ENCODE measurements at regions of chr3 and their contacts with region 1.

Region 1: GRCh38 chr3:149752051-149752787 is at the start of gene COMMD2:
- DNase-seq: peak; percentile 97
- ATAC-seq: peak; percentile 100
- H3K4me3 ChIP-seq: peak within 1 kb of the TSS; percentile 93 to 95
- H3K27ac ChIP-seq: peak within 1 kb of the TSS; percentile 49
- H3K4me1 ChIP-seq: peaks cover 3 to 15% of the 10 kb centered on the region in 2 experiments; a peak in 3 of 4 replicates
- H3K27me3 ChIP-seq: no peaks in the 10 kb centered on the region
- CTCF ChIP-seq: peak; percentile 47 to 80 (median 55)
- POLR2A ChIP-seq: no peak
- RAD21 ChIP-seq: peak; percentile 75
- total RNA-seq, gene COMMD2: 35.5 TPM

Region 2: DNA sequence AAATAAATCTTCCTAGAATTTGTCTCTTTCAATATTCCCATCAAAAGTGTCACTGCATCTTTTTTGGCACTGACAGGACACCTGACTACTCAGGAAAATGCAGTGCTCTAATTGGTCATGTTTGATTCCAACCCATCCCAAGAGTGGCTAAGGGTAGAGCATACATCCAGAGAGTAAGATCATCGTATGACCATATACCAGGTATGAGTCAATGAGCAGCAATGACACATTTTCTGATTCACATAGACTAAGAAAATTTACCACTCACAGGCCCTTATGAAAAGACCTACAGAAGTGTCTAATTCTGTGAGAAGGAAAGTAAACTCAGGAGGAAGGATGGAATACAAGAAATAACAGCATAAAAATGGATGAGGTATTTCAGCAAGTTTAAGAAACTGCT is 1908.9 kb before region 1 on chr3:
- CTCF ChIA-PET with region 1: no interaction called
- POLR2A ChIA-PET with region 1: no interaction called
- RAD21 ChIA-PET with region 1: no interaction called
- intact Hi-C with region 1: no loop called
- DNase-seq: no peak
- ATAC-seq: no peak
- H3K4me3 ChIP-seq: no peak overlapping the region
- H3K27ac ChIP-seq: no peak overlapping the region
- H3K4me1 ChIP-seq: no peaks in the 10 kb centered on the region
- H3K27me3 ChIP-seq: no peaks in the 10 kb centered on the region
- CTCF ChIP-seq: no peak
- POLR2A ChIP-seq: no peak
- RAD21 ChIP-seq: no peak

Region 3: DNA sequence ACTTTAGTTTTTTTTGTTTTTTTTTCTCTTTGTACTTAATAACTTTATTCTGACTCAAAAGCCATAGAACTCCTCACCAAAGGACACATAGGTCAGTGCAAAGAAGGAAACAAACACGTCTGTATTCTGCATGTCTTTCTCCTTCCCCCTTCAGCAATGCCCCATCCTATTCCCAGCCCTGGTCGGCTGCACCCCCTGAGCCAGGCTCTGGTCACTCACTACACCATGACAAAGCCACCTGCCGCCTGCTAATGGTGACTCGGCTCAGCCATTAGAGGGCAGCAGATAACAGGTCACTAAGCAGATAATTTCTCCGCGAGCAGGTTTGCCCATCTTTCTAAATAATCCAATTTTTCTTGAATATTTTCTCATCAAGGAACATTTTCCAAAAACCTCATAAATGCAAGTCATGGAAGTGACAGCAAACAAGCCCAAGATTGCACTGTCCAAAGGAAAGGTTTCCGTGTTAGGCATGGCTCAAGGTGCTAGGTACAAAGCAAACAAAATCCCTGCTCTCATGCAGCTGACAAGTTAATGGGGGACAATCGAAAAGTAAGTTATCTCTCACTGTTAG is 239.9 kb before region 1 on chr3:
- CTCF ChIA-PET with region 1: interaction called, 4 read pairs
- POLR2A ChIA-PET with region 1: no interaction called
- RAD21 ChIA-PET with region 1: no interaction called
- intact Hi-C with region 1: loop called (anchors 1 kb)
- DNase-seq: peak; percentile 50
- ATAC-seq: peak; percentile 99
- H3K4me3 ChIP-seq: no peak overlapping the region
- H3K27ac ChIP-seq: no peak overlapping the region
- H3K4me1 ChIP-seq: no peaks in the 10 kb centered on the region
- H3K27me3 ChIP-seq: no peaks in the 10 kb centered on the region
- CTCF ChIP-seq: peak; percentile 80 to 94 (median 92)
- POLR2A ChIP-seq: no peak
- RAD21 ChIP-seq: peak; percentile 96

Region 4: DNA sequence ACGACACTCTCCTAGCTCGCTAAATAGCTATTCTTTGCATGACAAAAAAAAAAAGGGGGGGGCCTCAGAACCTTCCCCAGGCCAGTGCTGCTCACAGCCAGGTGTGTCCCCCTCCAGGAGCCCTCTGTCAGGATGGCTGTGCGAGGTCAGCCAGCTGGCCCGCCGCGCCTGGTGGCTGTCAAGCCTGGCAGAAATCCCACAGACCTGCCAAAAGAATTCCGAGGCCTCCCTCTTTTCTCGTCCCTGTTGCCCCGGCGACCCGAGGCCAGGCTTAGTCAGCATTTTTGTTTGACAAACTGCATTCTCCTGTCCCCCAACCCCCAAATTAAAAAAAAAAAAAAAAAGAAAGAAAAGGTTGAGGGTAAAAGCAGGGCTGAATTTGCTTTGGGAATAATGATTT is 215.8 kb before region 1 on chr3:
- CTCF ChIA-PET with region 1: interaction called, 15 read pairs
- POLR2A ChIA-PET with region 1: no interaction called
- RAD21 ChIA-PET with region 1: no interaction called
- intact Hi-C with region 1: loop called (anchors 2 kb)
- DNase-seq: no peak
- ATAC-seq: no peak
- H3K4me3 ChIP-seq: no peak overlapping the region
- H3K27ac ChIP-seq: no peak overlapping the region
- H3K4me1 ChIP-seq: peaks cover 0 to 9% of the 10 kb centered on the region in 2 experiments; a peak in 1 of 4 replicates
- H3K27me3 ChIP-seq: no peaks in the 10 kb centered on the region
- CTCF ChIP-seq: no peak
- POLR2A ChIP-seq: no peak
- RAD21 ChIP-seq: no peak

Region 5: GRCh38 chr3:149765762-149766334 is 13.6 kb after region 1 on chr3:
- CTCF ChIA-PET with region 1: interaction called, 13 read pairs
- POLR2A ChIA-PET with region 1: no interaction called
- RAD21 ChIA-PET with region 1: interaction called in 1 of 2 experiments, 3 read pairs
- intact Hi-C with region 1: no loop called
- DNase-seq: no peak
- ATAC-seq: peak; percentile 79
- H3K4me3 ChIP-seq: no peak overlapping the region
- H3K27ac ChIP-seq: no peak overlapping the region
- H3K4me1 ChIP-seq: no peaks in the 10 kb centered on the region
- H3K27me3 ChIP-seq: peaks cover 3% of the 10 kb centered on the region; the same call in 1 of the 2 replicates
- CTCF ChIP-seq: peak; percentile 50 to 64 (median 56)
- POLR2A ChIP-seq: no peak
- RAD21 ChIP-seq: peak; percentile 72